ENCODE measurements at regions of chr1 and their contacts with region 1.

Region 1: DNA sequence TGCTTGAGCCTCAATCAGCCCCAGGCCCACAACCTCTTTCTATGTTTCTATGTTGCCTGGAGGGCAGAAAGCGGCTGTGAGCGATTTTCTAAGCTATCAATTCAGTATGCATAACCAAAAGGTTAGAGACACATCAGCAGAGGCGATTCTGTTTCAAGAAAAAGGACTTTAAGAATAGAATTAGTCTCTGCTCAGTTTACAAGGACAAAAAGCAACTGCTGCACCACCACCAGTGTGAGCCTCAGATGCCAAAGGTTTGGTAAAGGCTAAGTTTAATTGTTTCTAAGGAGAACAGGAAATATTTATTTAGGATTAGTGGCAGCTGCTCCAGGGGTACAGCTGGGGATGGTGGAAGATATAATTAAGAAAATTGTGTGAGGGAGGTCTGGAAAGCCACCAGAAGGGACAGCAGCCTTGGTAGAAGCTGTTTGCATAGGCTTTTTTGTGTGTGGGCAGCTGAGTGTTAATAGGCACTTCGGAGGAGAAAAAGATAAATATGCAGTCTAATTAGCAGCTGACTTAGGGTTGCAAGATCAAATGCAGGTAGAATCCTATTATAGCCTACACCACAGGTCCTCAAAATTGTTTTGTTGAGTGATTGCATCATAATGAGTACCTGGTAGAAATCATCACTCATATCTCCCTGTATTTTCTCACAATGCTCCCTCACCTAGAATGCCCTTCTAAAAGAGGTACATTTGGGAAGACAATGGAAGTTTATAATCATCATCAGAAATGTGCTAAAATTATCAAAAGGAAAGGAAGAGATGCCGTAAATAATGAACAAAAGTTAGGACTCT is 35.8 kb downstream of the ZC3H11B start:
- DNase-seq: no peak
- ATAC-seq: no peak

Region 2: GRCh38 chr1:219304227-219305226 is 272.6 kb before region 1 on chr1:
- intact Hi-C with region 1: no loop called
- DNase-seq: no peak
- ATAC-seq: peak; percentile 62

Region 3: GRCh38 chr1:219639876-219640577 is 62.9 kb after region 1 on chr1:
- intact Hi-C with region 1: no loop called
- DNase-seq: no peak
- ATAC-seq: no peak

Region 4: GRCh38 chr1:219801156-219801820 is 224.2 kb after region 1 on chr1:
- intact Hi-C with region 1: loop called (anchors 5 kb)
- DNase-seq: no peak
- ATAC-seq: no peak

Measured in Right ventricle myocardium inferior (tissue), 1 donor.